ENCODE measurements at regions of chr3 and their contacts with region 1.

Region 1: DNA sequence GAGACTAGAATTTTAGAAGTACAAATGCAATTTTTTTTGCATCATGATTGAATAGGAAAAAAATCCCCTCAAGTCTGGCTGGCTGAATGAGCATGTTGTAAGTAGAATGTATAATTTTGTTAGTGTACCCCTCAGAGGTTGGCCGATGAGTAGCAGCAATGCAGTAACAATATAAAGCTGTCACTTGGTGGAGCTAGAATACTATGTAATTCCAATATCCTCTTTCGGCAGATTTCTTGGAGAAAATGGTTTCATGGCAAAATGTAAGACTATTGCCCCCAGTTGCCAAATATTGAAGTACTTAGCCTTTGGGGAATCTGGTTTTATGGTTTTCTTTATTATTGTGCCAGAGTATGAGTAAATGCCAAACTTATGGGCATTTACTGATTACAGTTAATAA is 39.8 kb upstream of the SGO1 start:
- DNase-seq: no peak
- ATAC-seq: no peak
- H3K4me3 ChIP-seq: no peak overlapping the region
- H3K27ac ChIP-seq: no peak overlapping the region
- H3K4me1 ChIP-seq: no peaks in the 10 kb centered on the region
- H3K27me3 ChIP-seq: no peaks in the 10 kb centered on the region
- CTCF ChIP-seq: peak; percentile 23 to 69 (median 48)
- POLR2A ChIP-seq: no peak

Region 2: GRCh38 chr3:20320489-20320888 is 94.7 kb after region 1 on chr3:
- intact Hi-C with region 1: no loop called
- DNase-seq: no peak
- ATAC-seq: no peak
- H3K4me3 ChIP-seq: no peak overlapping the region
- H3K27ac ChIP-seq: no peak overlapping the region
- H3K4me1 ChIP-seq: peaks cover 0 to 28% (median 0%) of the 10 kb centered on the region in 12 donors
- H3K27me3 ChIP-seq: no peaks in the 10 kb centered on the region
- CTCF ChIP-seq: no peak
- POLR2A ChIP-seq: no peak

Region 3: GRCh38 chr3:20537234-20537633 is 311.5 kb after region 1 on chr3:
- intact Hi-C with region 1: no loop called
- DNase-seq: no peak
- ATAC-seq: no peak
- H3K4me3 ChIP-seq: no peak overlapping the region
- H3K27ac ChIP-seq: no peak overlapping the region
- H3K4me1 ChIP-seq: no peaks in the 10 kb centered on the region
- H3K27me3 ChIP-seq: no peaks in the 10 kb centered on the region
- CTCF ChIP-seq: no peak
- POLR2A ChIP-seq: no peak

Region 4: DNA sequence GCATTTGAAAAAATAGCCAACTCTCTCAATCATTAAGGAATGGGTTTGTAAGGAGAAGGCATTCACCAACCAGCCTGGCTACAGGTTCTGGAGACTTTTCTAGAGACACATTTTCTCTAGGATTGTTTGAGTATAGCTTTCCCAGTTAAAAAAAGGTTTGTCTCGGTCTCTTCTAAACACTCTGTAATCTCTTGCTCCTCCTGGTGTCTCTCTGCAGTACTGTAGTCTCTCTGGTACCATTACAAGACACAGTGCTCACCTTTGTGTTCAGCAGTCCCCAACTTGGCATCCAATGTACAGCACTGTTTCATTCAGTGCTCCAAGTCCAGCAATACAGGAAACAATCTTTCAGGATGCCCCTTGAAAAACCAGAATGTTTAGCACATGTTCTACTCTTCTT is 990.8 kb after region 1 on chr3:
- intact Hi-C with region 1: loop called in 1 of 10 experiments (anchors 10 kb)
- DNase-seq: no peak
- ATAC-seq: no peak
- H3K4me3 ChIP-seq: no peak overlapping the region
- H3K27ac ChIP-seq: no peak overlapping the region
- H3K4me1 ChIP-seq: no peaks in the 10 kb centered on the region
- H3K27me3 ChIP-seq: no peaks in the 10 kb centered on the region
- CTCF ChIP-seq: peak in 3 of 12 donors; percentile 10 to 20 (median 11)
- POLR2A ChIP-seq: no peak

Region 5: DNA sequence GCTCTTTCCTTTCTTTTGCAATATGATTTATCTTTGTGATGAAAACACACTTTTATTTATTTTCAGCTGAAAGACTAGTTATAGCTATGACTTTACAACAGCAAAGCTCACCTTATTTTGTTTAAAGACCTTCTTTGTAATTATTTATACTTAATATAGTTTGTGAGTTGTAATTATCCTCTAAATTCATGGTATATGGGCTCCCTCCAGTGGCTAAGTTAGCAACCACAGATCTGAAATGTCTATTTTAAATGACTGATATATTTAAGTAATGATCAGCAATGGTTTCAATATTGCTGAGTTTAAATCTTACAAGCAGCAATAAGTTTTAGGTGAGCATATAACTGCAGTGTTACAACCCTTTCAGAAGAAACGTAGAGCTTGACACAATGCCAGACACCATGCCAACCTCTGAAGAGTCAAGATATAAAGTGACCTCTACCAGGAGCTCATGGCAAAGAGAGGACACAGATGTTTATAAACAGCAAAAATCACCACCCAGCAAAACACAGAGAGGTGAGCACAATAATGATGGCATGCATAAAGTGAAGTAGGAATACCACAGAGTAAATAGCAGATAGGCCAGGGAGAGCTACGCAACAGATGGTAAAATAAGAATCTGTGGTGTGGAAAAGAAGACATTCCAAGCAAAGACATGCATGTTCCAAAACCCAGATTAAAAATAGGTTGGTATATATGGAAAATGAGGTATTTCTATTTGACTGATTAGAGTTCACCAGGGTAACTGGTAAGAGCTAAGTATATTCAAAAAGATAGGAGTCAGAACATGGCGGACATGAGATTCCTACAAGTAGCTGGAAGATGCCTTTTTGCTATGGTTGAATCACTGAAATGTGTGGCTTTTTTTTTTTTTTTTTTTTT is 1668.9 kb after region 1 on chr3:
- intact Hi-C with region 1: loop called in 2 of 10 experiments (anchors 10 kb)
- DNase-seq: peak in 1 of 5 donors; percentile 24
- ATAC-seq: peak; percentile 30 to 62 (median 50)
- H3K4me3 ChIP-seq: peak overlapping the region in 1 of 12 donors; percentile 15
- H3K27ac ChIP-seq: peak overlapping the region in 3 of 12 donors; percentile 16 to 39 (median 21)
- H3K4me1 ChIP-seq: peaks cover 0 to 24% (median 4%) of the 10 kb centered on the region in 12 donors
- H3K27me3 ChIP-seq: no peaks in the 10 kb centered on the region
- CTCF ChIP-seq: peak; percentile 45 to 84 (median 70)
- POLR2A ChIP-seq: no peak

Region 6: DNA sequence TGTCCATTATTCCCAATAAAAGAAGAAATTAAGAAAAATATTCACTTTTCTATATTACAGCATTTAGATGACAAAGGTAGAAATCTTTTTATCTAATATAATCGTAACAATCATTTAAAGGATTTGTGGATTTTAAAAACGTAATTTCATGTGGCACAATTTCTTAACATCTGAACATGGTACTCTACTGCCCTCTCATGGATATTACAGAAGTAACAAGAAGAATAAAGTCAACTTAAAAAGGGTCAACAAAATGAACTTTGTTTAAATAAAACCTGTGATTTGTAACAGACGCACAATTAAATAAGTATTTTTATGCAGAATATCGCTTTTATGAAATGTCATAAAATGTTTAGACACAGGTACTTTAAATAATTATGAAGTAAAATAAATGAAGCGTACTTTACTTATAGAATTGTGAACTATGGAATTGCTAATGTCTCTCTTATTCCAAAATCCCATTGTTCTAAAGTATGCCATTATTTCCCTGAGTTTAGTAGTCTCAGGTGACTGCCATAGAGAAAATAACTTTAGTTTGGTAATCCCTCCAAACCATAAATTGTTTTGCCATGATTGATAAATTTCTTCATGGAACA is 1892.1 kb after region 1 on chr3:
- intact Hi-C with region 1: loop called in 2 of 10 experiments (anchors 5 to 10 kb)
- DNase-seq: no peak
- ATAC-seq: no peak
- H3K4me3 ChIP-seq: no peak overlapping the region
- H3K27ac ChIP-seq: no peak overlapping the region
- H3K4me1 ChIP-seq: no peaks in the 10 kb centered on the region
- H3K27me3 ChIP-seq: no peaks in the 10 kb centered on the region
- CTCF ChIP-seq: peak; percentile 52 to 80 (median 66)
- POLR2A ChIP-seq: no peak